Posterior cingulate gyrus (tissue), 11 donors: ENCODE measurements at regions of chr15 and their contacts with region 1.

Region 1: GRCh38 chr15:39782441-39783138 is at the start of gene FSIP1:
- DNase-seq: peak; percentile 90 to 99 (median 94)

Region 2: DNA sequence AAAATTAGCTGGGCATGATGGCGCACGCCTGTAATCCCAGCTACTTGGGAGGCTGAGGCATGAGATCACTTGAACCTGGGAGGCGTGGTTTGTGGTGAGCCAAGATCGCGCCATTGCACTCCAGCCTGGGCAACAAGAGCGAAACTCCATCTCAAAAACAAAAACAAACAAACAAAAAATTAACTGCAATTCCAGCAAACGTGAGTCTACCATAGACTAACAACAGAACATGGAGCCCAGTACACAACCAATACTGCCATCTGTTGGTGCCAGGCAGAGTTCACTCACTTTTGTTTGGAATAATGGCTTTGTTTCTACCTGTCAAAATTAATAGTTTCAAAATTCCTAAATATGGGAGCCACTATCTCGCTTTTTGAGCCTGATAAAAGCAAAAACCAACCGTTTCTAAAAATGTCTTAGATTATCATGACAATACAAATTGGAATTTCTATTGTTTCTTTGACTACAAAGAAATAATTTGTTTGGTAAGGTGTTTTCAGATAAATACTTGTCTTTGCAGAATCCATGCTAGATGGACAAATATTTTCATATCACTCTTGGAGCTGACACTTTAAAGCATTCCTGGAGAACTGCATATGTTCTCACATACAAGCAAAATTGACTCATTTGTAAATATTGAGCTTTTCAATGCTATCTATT is 92.4 kb after region 1 on chr15:
- intact Hi-C with region 1: loop called (anchors 5 kb)
- DNase-seq: no peak

Region 3: GRCh38 chr15:39934397-39935071 is 151.9 kb after region 1 on chr15:
- intact Hi-C with region 1: loop called (anchors 5 kb)
- DNase-seq: peak in 1 of 10 donors; percentile 18

Region 4: GRCh38 chr15:39976291-39977274 is 194.0 kb after region 1 on chr15:
- intact Hi-C with region 1: loop called (anchors 2 kb)
- DNase-seq: peak; percentile 66 to 97 (median 78)

Region 5: DNA sequence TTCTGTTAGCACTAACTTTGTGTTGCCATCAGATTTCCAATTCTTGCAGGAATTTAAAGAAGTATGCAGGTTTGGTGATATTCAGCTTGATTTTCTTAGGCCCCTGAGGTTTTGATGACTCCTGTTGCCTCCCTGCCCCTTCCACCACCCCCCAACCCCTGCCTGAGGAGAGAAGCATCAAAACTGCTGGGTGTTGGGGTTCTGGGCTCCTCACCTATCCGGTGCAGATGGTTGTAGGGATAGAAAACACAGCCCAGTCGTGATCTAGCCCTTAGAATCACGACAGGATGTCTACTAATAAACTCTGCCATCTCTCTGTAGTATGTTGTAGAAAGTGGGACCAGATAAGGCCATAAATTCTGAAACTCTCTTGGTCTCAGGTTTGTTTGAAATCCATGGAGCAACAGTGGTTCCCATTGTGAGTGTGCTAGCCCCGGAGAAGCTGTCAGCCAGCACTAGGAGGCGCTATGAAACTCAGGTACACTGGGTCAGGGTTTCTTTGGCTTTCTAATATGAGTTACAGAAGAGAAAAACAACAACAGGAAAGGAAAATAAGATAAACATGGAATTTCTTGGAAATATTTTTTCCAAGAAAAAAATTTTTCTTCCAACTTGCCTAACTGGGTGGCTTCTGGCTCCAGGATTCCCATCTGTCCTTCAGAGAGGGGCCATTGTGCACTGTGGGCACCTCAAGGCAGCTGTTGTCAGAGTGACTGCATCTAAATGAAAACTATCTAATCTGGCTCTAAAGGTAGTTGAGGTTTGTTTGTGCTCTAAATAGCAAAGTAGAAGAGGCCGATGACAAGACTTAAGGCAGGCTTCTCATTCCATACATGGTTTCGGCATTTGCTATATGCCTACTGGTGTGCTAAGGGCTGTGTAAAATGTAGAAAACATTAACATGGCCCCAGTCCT is 247.6 kb after region 1 on chr15:
- intact Hi-C with region 1: loop called (anchors 5 kb)
- DNase-seq: peak in 1 of 10 donors; percentile 59

Region 6: GRCh38 chr15:40108855-40109735 is 326.5 kb after region 1 on chr15 and contains the start of gene BMF:
- intact Hi-C with region 1: loop called (anchors 10 kb)
- DNase-seq: peak; percentile 93 to 99 (median 97)

Region 7: DNA sequence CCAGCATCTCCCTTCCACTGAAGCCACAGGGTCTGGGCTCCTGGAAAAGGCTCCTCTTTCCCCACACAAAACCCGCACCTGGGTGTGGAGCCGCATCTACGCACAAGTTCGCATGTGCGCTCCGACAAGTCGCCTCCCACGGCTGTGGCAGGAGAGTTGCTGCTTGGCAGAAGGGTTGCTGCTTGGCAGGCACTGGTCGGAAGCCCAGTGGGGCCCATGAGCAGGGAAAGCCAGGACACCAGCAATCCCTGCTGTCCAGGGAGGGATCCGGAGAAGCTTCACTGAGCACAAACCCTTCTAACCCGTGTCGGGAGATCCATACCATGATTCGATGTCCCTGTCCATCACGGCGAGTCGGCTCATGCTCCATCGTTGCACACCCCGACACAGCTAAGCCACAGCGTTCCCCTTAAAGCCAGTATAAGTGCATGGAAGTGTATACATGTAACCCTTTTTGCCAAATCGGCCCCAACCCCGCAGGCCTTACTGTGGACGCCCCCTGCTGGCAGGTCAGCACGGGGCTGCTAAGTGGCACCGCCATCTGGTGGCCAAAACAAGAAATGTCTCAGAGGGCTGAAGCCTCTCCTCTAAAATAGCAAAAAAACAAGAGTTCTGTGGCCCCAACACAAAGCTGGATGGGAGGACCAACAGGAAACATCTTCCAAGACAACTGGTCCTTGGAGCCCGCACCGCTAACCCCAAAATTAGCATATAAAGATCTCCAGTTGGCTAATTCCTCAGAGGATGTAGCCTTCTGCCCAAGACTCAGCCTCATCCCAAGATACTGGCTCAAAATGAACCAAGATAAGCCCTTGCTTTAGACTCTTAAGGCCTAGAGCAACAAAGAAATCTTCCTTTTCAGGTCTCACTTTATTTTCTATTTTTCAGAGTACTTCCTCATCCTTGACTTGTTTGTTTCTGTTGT is 492.0 kb after region 1 on chr15:
- intact Hi-C with region 1: loop called (anchors 10 kb)
- DNase-seq: peak; percentile 61 to 96 (median 82)